Caco-2 (cell line): ENCODE measurements at regions of chr14 and their contacts with region 1.

Region 1: DNA sequence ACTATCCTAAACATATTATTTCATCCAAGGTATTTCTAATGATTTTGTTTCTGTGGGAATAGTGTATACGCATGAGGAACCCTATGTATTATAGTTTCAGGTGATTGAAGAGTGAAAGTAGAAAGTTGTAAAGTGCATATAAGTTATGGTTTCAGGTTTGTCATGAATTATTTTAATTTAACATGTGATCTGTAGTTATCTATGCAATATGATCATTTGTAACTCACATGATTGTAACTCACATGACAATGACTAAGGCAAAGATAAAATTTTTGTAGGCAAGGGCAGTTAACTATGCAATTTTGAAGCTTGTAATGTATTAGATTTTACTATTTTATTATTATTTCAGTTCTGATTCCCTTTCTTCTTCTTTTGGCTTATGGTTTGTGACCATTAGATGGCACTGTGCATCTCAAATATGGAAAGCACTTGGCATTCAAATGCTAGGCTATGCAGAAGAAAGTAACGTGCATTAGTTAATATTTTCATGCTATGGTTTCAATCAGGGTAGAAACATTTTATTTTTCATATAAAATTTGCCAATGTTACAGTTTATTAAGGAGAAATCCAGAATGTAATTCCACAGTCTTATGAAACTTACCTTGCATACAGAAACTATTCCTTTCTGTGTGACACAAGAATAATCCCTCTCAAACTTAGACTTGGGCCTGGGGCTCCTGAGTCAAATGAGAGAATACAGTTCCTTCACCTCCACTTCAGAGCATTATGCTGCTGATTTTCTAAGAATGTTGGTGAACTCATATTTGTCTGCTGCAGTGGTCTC is 15.8 kb upstream of the TMEM30B start:
- DNase-seq: peak in 1 of 2 experiments; percentile 43
- H3K4me3 ChIP-seq: no peak overlapping the region
- H3K4me3 Mint-ChIP-seq: no peak overlapping the region
- H3K27ac Mint-ChIP-seq: no peak overlapping the region
- H3K4me1 ChIP-seq: no peaks in the 10 kb centered on the region
- H3K4me1 Mint-ChIP-seq: no peaks in the 10 kb centered on the region
- H3K27me3 ChIP-seq: no peaks in the 10 kb centered on the region
- H3K27me3 Mint-ChIP-seq: no peaks in the 10 kb centered on the region
- CTCF ChIP-seq: peak; percentile 39 to 66

Region 2: DNA sequence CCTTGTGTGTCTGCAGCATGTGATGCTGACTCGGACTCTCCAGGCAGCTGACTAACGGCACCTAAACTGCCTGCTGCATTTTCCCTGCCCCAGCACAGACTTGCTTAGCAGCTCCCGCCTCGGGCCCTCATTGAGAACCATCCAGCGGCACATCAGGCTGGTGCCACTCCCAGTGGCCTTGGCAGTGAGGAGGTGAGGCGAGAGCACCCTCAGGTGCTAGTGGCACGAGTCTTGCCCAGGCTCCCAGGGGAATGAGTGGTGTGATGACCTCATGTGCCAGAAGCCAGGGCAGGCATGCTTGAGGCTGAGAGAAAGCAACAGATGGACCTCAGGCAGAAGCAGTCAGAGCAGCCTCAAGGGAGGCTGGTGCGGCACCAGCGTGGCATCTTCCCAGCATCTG is 84.6 kb after region 1 on chr14:
- CTCF ChIA-PET with region 1: no interaction called
- POLR2A ChIA-PET with region 1: no interaction called
- intact Hi-C with region 1: loop called (anchors 1 kb)
- DNase-seq: no peak
- H3K4me3 ChIP-seq: no peak overlapping the region
- H3K4me3 Mint-ChIP-seq: no peak overlapping the region
- H3K27ac Mint-ChIP-seq: no peak overlapping the region
- H3K4me1 ChIP-seq: no peaks in the 10 kb centered on the region; the same call in 1 of the 2 replicates
- H3K4me1 Mint-ChIP-seq: no peaks in the 10 kb centered on the region
- H3K27me3 ChIP-seq: no peaks in the 10 kb centered on the region
- H3K27me3 Mint-ChIP-seq: no peaks in the 10 kb centered on the region
- CTCF ChIP-seq: no peak

Region 3: DNA sequence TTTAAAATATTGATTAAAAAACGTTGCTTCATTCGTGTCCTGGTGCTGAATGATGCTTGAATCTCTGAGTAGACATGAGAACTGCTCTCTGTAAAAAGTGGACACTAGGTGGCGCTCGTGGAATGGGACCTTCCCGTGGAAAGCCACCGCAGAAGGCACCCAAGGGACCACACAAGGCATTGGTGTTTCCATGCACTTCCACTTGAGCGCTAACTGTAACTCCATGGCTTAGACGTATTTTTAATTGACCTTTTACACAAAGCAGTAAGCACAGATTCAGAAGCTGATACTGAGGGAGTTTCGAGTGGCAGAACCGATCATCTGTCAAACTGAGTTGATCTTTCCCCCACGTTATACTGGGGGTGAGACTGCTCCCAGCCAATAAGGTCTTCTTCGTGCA is 159.8 kb after region 1 on chr14:
- CTCF ChIA-PET with region 1: no interaction called
- POLR2A ChIA-PET with region 1: no interaction called
- intact Hi-C with region 1: loop called (anchors 2 kb)
- DNase-seq: peak; percentile 74 to 78
- H3K4me3 ChIP-seq: no peak overlapping the region
- H3K4me3 Mint-ChIP-seq: no peak overlapping the region
- H3K27ac Mint-ChIP-seq: no peak overlapping the region
- H3K4me1 ChIP-seq: no peaks in the 10 kb centered on the region
- H3K4me1 Mint-ChIP-seq: no peaks in the 10 kb centered on the region
- H3K27me3 ChIP-seq: no peaks in the 10 kb centered on the region
- H3K27me3 Mint-ChIP-seq: no peaks in the 10 kb centered on the region
- CTCF ChIP-seq: peak; percentile 84 to 87

Region 4: DNA sequence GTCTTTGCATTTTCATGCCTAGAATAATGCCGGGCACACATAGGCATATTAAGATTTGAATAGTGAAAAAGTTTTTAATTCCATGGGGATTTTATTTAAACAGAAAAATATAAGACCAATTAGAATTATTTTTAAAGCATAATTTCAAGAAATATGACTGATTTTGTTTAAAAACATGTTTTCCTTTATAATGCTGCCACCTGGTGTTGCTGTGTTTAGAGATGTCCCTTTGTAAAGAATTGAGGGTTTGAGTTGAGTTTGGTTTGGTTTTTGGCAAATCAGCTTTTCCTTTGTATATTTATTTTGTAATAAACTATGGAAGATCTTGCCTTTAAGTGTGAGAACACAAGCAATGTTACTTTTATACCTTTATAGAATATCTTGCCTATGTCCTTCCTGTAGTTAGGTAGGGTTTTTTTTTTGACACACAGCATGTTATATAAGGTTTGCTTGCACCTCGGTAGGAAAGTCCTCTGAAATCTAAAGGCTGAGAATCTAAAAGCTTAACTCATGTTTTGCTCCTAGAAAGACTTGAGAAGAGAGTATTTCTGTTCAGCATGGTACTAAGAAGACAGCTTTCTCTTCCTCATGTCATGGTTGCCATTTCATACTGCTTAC is 434.0 kb after region 1 on chr14:
- CTCF ChIA-PET with region 1: no interaction called
- POLR2A ChIA-PET with region 1: no interaction called
- intact Hi-C with region 1: loop called (anchors 10 kb)
- DNase-seq: no peak
- H3K4me3 ChIP-seq: no peak overlapping the region
- H3K4me3 Mint-ChIP-seq: no peak overlapping the region
- H3K27ac Mint-ChIP-seq: no peak overlapping the region
- H3K4me1 ChIP-seq: 0 out of 2 replicates have a peak, but pooled peaks cover 5% of the 10 kb centered on the region
- H3K4me1 Mint-ChIP-seq: peaks cover 6% of the 10 kb centered on the region
- H3K27me3 ChIP-seq: no peaks in the 10 kb centered on the region
- H3K27me3 Mint-ChIP-seq: no peaks in the 10 kb centered on the region
- CTCF ChIP-seq: no peak